CD8-positive, alpha-beta T cell (primary cell): ENCODE measurements at regions of chr22 and their contacts with region 1.

Region 1: DNA sequence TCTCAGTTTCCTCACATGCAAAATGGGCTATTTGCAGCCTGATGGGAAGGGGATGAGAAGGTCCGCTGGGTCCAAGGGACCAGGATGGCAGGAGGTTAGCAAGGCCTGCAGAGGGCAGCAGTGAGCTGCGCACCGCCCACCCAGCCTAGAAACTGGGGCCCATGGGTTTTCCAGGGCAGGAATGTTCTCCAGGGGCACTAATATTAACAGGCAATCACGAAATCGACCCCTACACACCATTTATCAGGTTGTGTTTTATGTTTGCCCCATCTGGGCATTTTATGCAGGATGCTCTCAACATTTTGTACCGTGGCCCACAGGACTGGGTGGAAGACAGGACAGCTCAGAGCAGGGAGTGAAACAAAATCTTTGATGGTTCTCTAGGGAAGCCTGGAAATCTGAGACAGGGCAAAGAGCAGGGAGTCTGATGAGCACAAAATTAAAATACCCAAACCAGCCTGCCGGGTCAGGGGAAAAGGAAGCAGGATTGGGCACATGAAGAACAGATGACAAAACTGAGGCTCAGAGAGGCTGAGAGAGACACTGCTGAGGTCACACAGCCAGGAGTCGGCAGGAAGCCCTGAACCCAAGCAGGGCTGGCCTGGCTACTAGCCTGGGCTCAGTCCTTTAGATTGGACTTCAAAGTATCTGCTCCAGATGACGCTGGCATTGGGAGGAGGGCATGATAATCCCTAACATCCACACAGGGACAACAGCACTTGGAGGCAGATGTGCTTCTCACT is 1.6 kb upstream of the BCR start:
- DNase-seq: peak; percentile 35 to 81 (median 70)
- ATAC-seq: peak; percentile 31
- H3K4me3 ChIP-seq: no peak overlapping the region
- H3K4me3 Mint-ChIP-seq: peak overlapping the region; percentile 82
- H3K27ac ChIP-seq: no peak overlapping the region
- H3K27ac Mint-ChIP-seq: peak overlapping the region; percentile 71
- H3K4me1 ChIP-seq: peaks cover 40% of the 10 kb centered on the region
- H3K4me1 Mint-ChIP-seq: peaks cover 46% of the 10 kb centered on the region
- H3K27me3 ChIP-seq: no peaks in the 10 kb centered on the region
- H3K27me3 Mint-ChIP-seq: no peaks in the 10 kb centered on the region
- CTCF ChIP-seq: peak; percentile 98

Region 2: DNA sequence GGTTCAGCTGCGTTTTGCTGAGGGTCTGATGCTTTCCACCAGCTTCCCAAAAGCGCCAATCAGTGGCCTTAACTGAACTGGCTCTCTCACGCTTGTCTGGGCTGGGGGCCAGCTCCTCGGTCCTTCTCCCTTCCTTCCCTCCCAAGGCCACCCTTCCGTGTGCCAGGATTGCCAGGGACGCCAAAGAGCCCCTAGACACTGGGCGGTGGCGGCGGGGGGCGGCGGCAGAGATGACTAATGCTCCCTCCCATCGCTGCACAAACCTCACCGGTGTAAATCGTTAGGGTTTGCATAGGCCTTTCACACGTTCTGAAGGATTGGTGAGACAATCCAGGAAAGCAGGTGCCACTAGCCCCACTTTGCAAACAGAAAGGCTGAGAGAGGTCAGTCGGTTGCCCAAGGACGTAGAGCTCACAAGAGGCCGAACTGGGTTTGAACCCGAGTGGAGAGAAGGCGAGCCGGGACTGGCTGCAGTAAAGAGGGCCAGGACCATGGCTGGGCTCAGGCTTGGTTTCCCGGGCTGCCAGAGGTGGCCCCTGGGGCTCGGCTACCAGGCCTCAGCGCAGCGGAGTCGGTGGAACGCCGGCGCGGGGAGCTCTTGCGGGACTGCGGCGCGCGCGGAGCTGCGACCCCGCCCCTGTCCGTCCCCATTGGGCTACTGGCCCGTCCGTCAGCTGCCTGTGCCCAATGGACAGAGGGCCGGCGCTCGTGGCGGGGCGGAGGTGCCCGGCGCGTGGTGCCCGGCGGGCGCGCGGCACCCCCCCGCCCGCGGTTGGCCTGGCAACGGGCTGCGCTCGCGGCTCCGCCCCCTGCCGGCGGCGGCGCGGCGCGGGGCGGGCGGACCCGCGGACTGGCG is 109.0 kb before region 1 on chr22:
- CTCF ChIA-PET with region 1: no interaction called
- POLR2A ChIA-PET with region 1: no interaction called
- intact Hi-C with region 1: loop called in 1 of 2 experiments (anchors 1 kb)
- DNase-seq: peak; percentile 79 to 95 (median 87)
- ATAC-seq: peak; percentile 95
- H3K4me3 ChIP-seq: peak overlapping the region; percentile 44 to 49
- H3K4me3 Mint-ChIP-seq: peak overlapping the region; percentile 86
- H3K27ac ChIP-seq: peak overlapping the region in 1 of 2 experiments; percentile 33
- H3K27ac Mint-ChIP-seq: no peak overlapping the region
- H3K4me1 ChIP-seq: peaks cover 11% of the 10 kb centered on the region
- H3K4me1 Mint-ChIP-seq: peaks cover 16% of the 10 kb centered on the region
- H3K27me3 ChIP-seq: no peaks in the 10 kb centered on the region
- H3K27me3 Mint-ChIP-seq: peaks cover 13% of the 10 kb centered on the region
- CTCF ChIP-seq: no peak

Region 3: DNA sequence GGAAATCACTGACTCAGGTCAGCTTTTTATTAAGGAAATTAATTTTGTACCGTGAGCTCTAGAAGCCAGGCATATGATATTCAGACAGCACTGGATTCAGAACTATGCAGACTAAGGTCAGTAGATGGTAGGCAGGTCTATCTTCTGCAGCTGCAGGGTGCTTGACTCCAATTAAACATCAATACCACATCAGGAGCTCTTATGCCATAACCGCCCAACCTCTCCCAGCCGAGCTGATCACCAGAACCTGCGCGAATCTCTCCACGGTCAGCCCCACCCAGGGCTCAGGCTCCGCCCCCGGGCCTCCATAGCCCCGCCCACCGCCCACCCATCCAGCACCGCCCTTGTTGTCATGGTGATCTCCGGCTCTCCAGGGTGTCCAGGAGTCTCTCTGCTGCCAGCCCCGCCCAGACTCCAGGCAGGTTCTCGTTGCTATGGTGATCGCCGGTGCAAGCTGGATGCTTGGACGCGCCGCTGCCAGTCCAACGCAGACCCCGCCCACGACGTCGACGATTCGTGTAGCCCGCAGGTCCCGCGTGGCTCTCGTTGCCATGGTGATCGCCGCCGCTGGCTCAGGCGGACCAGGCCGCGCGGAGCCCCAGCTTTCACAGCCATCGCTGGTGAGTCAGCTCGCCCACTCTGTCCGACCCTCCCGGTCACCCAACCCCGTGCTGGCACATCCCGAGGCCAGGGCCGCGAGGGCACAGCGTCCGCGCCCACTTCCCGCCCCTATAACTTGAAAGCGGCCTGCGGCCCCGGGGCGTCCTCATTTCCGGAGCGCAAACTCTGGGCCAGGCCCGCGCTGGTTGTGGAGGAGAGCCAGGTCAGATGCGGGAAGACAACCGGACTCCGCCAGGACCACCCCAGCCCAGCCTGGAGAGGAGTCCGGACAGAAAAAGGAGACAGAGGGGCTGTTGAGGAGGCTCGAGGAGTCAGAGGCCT is 33.5 kb before region 1 on chr22 and contains the start of gene RAB36:
- CTCF ChIA-PET with region 1: interaction called, 22 read pairs
- POLR2A ChIA-PET with region 1: no interaction called
- intact Hi-C with region 1: loop called (anchors 1 kb)
- DNase-seq: peak; percentile 73 to 97 (median 89)
- ATAC-seq: peak; percentile 50
- H3K4me3 ChIP-seq: peak within 1 kb of the TSS; percentile 35 to 40
- H3K4me3 Mint-ChIP-seq: peak within 1 kb of the TSS; percentile 78
- H3K27ac ChIP-seq: peak within 1 kb of the TSS; percentile 71 to 87
- H3K27ac Mint-ChIP-seq: peak within 1 kb of the TSS; percentile 86
- H3K4me1 ChIP-seq: peaks cover 55% of the 10 kb centered on the region
- H3K4me1 Mint-ChIP-seq: peaks cover 46% of the 10 kb centered on the region
- H3K27me3 ChIP-seq: no peaks in the 10 kb centered on the region
- H3K27me3 Mint-ChIP-seq: no peaks in the 10 kb centered on the region
- CTCF ChIP-seq: no peak
- total RNA-seq, gene RAB36: 0.52 to 0.64 TPM

Region 4: GRCh38 chr22:23219822-23220484 is 41.3 kb after region 1 on chr22:
- CTCF ChIA-PET with region 1: interaction called, 5 read pairs
- POLR2A ChIA-PET with region 1: interaction called, 4 read pairs
- intact Hi-C with region 1: loop called (anchors 2 to 5 kb)
- DNase-seq: peak in 7 of 9 experiments; percentile 18 to 61 (median 48)
- ATAC-seq: peak; percentile 53
- H3K4me3 ChIP-seq: peak overlapping the region in 1 of 2 experiments; percentile 0
- H3K4me3 Mint-ChIP-seq: peak overlapping the region; percentile 77
- H3K27ac ChIP-seq: peak overlapping the region; percentile 2 to 55
- H3K27ac Mint-ChIP-seq: peak overlapping the region; percentile 93
- H3K4me1 ChIP-seq: peaks cover 98% of the 10 kb centered on the region
- H3K4me1 Mint-ChIP-seq: peaks cover 97% of the 10 kb centered on the region
- H3K27me3 ChIP-seq: no peaks in the 10 kb centered on the region
- H3K27me3 Mint-ChIP-seq: no peaks in the 10 kb centered on the region
- CTCF ChIP-seq: no peak

Region 5: GRCh38 chr22:23251445-23252232 is 73.0 kb after region 1 on chr22:
- CTCF ChIA-PET with region 1: interaction called, 9 read pairs
- POLR2A ChIA-PET with region 1: interaction called, 4 read pairs
- intact Hi-C with region 1: loop called in 1 of 2 experiments (anchors 2 kb)
- DNase-seq: peak in 1 of 9 experiments; percentile 30
- ATAC-seq: peak; percentile 56
- H3K4me3 ChIP-seq: no peak overlapping the region
- H3K4me3 Mint-ChIP-seq: no peak overlapping the region
- H3K27ac ChIP-seq: no peak overlapping the region
- H3K27ac Mint-ChIP-seq: no peak overlapping the region
- H3K4me1 ChIP-seq: peaks cover 40% of the 10 kb centered on the region
- H3K4me1 Mint-ChIP-seq: peaks cover 37% of the 10 kb centered on the region
- H3K27me3 ChIP-seq: no peaks in the 10 kb centered on the region
- H3K27me3 Mint-ChIP-seq: no peaks in the 10 kb centered on the region
- CTCF ChIP-seq: no peak

Region 6: GRCh38 chr22:23281406-23282088 is 102.9 kb after region 1 on chr22:
- CTCF ChIA-PET with region 1: interaction called, 225 read pairs
- POLR2A ChIA-PET with region 1: interaction called, 4 read pairs
- intact Hi-C with region 1: loop called (anchors 1 kb)
- DNase-seq: peak; percentile 60 to 88 (median 85)
- ATAC-seq: peak; percentile 67
- H3K4me3 ChIP-seq: no peak overlapping the region
- H3K4me3 Mint-ChIP-seq: no peak overlapping the region
- H3K27ac ChIP-seq: peak overlapping the region in 1 of 2 experiments; percentile 23
- H3K27ac Mint-ChIP-seq: no peak overlapping the region
- H3K4me1 ChIP-seq: peaks cover 24% of the 10 kb centered on the region
- H3K4me1 Mint-ChIP-seq: peaks cover 20% of the 10 kb centered on the region
- H3K27me3 ChIP-seq: no peaks in the 10 kb centered on the region
- H3K27me3 Mint-ChIP-seq: no peaks in the 10 kb centered on the region
- CTCF ChIP-seq: peak; percentile 94

Region 7: GRCh38 chr22:23385291-23386244 is 206.9 kb after region 1 on chr22:
- CTCF ChIA-PET with region 1: interaction called, 18 read pairs
- POLR2A ChIA-PET with region 1: no interaction called
- intact Hi-C with region 1: loop called in 1 of 2 experiments (anchors 2 kb)
- DNase-seq: peak; percentile 64 to 89 (median 82)
- ATAC-seq: peak; percentile 86
- H3K4me3 ChIP-seq: no peak overlapping the region
- H3K4me3 Mint-ChIP-seq: no peak overlapping the region
- H3K27ac ChIP-seq: no peak overlapping the region
- H3K27ac Mint-ChIP-seq: no peak overlapping the region
- H3K4me1 ChIP-seq: no peaks in the 10 kb centered on the region
- H3K4me1 Mint-ChIP-seq: peaks cover 2% of the 10 kb centered on the region
- H3K27me3 ChIP-seq: peaks cover 0 to 5% of the 10 kb centered on the region in 2 experiments
- H3K27me3 Mint-ChIP-seq: peaks cover 2% of the 10 kb centered on the region
- CTCF ChIP-seq: peak; percentile 95